Ascending aorta (tissue), 2 donors: ENCODE measurements at regions of chr2 and their contacts with region 1.

Region 1: DNA sequence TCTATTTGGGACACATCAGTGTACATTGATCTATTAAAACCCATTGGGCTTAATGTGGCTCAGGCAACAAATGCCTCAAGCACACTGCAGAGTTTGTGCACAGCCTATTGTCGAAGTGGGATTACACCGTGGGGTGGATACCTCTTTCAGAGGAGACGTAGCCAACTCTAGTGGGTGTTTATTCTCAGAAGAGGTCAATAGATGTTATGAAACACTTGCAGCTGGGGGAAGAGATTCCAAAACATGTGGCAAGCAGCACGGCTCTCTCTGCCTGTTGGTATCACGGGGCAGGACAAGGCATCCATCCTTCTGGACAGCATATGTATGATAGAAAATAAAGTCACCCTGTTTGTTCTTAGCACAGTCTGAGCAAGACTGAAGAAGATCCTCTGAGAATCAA is 121.4 kb upstream of the COPS8 start:
- DNase-seq: peak in 1 of 2 donors; percentile 50
- H3K4me3 ChIP-seq: no peak overlapping the region
- H3K27ac ChIP-seq: no peak overlapping the region
- H3K4me1 ChIP-seq: no peaks in the 10 kb centered on the region
- H3K27me3 ChIP-seq: no peaks in the 10 kb centered on the region
- CTCF ChIP-seq: no peak

Region 2: DNA sequence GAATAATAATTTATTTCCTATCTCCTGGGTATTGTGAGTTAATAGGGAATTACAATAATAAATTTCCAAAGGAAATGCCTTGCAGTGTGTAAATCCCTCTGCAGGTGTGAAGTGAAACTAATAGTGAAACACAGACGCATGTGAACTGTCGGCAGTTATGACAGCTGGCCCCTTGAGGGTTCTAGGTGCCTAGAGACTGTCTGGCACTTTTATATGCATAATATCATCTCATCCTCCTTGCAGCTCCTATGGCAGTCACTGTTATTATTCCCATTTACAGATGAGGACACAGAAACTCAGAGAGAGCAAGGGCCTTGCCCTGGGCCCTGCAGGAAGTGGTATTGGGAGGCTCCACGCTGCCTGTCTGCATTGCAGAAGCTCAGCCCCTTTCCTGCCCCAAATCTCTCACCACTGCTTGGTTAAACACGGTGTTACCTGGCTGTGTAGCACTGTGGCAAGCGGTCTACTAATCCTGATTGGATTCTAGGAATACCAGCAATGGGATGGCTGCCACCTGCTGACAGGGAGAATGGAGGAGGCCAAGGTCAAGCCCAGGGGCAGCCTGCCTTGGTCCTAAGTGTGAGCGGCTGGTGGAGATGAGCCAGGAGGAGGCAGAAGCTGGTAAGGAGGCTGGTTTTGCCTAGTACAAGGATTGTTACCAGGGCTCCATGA is 427.4 kb before region 1 on chr2:
- intact Hi-C with region 1: loop called (anchors 5 kb)
- DNase-seq: no peak
- H3K4me3 ChIP-seq: no peak overlapping the region
- H3K27ac ChIP-seq: no peak overlapping the region
- H3K4me1 ChIP-seq: peaks cover 0 to 5% of the 10 kb centered on the region in 2 donors
- H3K27me3 ChIP-seq: no peaks in the 10 kb centered on the region
- CTCF ChIP-seq: no peak

Region 3: GRCh38 chr2:236715491-236715961 is 248.8 kb before region 1 on chr2:
- intact Hi-C with region 1: no loop called
- DNase-seq: no peak
- H3K4me3 ChIP-seq: no peak overlapping the region
- H3K27ac ChIP-seq: no peak overlapping the region
- H3K4me1 ChIP-seq: peaks cover 0 to 8% of the 10 kb centered on the region in 2 donors
- H3K27me3 ChIP-seq: no peaks in the 10 kb centered on the region
- CTCF ChIP-seq: no peak